ENCODE measurements at regions of chr3 and their contacts with region 1.

Region 1: DNA sequence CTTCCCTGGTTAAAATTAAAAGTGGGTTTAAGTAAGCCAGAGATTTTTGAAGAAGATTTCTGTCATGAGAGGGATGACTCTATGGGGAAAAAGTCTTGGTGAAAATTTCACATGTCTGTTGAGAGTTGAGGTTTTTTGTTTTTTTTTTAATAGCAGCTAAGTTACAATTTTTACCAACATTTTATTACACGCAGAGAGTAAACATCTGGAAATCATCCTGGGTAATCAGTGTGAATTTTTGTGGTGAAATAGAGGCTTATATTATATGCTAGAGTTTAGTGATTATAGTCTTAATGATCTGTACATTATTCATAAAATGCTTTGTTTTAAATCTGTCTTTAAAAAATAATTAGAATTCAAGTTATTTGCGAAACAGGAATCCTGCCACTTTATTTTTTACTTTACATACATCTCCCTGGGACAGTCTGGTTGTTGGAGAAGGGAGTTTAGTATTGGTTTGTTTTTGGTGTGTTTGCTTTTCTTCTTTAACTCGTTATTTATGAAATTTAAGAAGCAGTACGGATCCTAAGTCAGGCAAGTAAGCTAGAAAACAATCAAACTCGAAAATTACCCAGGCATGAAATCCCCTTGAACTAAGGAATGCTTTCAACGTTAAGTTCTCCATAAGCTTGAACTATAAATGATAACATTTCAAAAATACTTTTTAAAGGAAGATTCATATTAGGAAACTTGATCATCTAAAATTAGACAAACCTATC is 143.4 kb upstream of the TSC22D2 start:
- DNase-seq: no peak
- H3K4me3 ChIP-seq: no peak overlapping the region
- H3K27me3 ChIP-seq: no peaks in the 10 kb centered on the region
- CTCF ChIP-seq: no peak

Region 2: DNA sequence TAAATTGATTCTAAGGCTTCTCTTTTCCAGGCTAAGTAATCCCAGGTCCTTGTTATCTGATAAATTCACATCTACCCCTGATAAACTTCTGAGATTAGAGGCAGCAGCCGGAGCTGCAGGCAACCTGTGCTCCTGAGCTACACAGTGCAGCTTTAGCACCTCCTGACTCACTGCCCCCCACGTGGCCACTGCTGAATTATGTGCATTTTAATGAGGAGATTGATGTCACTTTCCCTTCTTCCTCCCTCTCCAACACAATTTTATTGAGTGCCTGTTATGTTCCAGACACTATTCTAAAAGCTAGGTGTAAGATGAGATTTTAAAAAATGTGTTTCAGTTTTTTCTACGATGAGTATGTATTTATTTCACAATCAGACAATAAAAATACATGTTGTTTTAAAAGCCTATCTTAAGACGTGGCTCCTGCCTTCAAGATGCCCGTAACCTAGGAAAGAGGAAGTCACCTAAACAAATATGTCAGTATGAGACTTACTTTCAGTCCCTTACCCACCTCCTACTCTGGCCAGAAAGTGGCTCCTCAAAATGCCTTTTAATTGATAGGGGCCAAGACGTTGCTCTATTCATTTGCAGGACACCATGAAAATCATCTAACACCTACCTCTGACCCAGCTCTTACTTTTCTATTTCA is 132.5 kb before region 1 on chr3:
- CTCF ChIA-PET with region 1: no interaction called
- POLR2A ChIA-PET with region 1: no interaction called
- DNase-seq: no peak
- H3K4me3 ChIP-seq: no peak overlapping the region
- H3K27me3 ChIP-seq: no peaks in the 10 kb centered on the region
- CTCF ChIP-seq: no peak

Region 3: DNA sequence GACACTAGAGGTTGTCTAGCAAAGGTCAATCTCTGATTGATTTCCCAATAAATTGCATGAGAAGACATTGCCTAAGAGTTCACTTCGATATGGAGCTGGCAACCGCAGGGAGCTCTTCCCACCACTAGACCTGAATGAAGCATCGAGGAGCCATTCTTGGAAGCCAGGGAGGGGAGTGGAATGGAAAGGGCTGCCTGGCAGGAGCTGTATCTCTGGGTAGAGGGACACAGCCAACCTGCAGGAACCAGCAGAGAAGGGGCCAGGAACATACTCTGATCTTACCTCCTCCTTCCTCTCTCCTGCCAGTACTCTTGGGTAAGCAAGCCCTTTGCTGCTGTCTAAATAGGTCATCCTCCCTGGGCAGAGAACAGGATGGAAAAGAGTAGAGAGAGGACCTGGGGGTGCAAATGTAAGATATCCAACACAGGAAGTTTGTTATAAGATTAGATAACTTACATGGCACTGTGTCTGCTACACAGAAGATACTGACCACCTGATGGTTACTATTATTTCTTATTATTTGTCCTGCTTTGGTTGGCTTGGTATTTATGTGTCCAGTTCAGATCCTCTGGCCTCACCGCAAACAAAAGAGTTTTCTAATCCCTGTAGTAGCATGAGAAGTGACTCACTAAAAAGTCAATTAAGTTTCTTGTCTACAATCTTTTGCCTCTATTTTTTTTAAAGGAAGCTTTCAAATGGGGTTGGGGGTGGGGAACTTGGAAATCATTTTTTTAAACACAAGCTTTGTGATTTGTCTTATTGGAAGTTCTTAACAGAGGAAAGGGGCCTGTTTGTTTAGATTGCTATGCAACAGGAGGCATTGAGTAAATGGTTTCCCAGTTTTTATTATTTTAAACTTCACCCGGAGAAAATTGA is 13.3 kb before region 1 on chr3:
- CTCF ChIA-PET with region 1: interaction called, 10 read pairs
- POLR2A ChIA-PET with region 1: no interaction called
- DNase-seq: no peak
- H3K4me3 ChIP-seq: no peak overlapping the region
- H3K27me3 ChIP-seq: no peaks in the 10 kb centered on the region
- CTCF ChIP-seq: no peak